ENCODE measurements at regions of chr4 and their contacts with region 1.

Region 1: DNA sequence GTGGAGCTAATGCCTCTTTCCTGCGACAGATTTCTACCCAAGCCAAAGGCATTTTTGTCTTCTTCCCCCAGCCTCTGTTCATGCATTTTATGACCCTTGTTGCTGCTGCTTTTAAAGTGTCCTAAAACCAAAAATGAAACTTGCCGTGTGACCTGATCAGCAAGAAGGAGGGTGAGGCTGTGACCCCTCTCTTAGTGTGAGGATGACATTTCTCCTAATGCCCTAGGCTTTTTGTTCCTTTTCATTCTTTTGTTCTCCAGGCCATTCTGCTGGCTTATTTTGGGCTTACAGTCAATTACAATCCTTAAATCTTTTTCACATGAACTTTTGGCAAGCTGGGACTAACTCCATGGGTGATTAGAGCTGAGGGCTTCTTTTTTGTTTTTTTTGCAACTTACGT is 34.4 kb downstream of the PTTG2 start:
- DNase-seq: no peak
- ATAC-seq: no peak
- H3K4me3 Mint-ChIP-seq: no peak overlapping the region
- H3K27ac Mint-ChIP-seq: peak overlapping the region; percentile 15
- H3K4me1 Mint-ChIP-seq: peaks cover 69% of the 10 kb centered on the region
- H3K27me3 Mint-ChIP-seq: no peaks in the 10 kb centered on the region
- CTCF ChIP-seq: no peak

Region 2: GRCh38 chr4:37983951-37984350 is 10.6 kb before region 1 on chr4:
- CTCF ChIA-PET with region 1: no interaction called
- POLR2A ChIA-PET with region 1: no interaction called
- intact Hi-C with region 1: no loop called
- DNase-seq: no peak
- ATAC-seq: no peak
- H3K4me3 Mint-ChIP-seq: no peak overlapping the region
- H3K27ac Mint-ChIP-seq: no peak overlapping the region
- H3K4me1 Mint-ChIP-seq: peaks cover 75% of the 10 kb centered on the region
- H3K27me3 Mint-ChIP-seq: no peaks in the 10 kb centered on the region
- CTCF ChIP-seq: no peak

Region 3: GRCh38 chr4:38011511-38012162 is 17.1 kb after region 1 on chr4:
- CTCF ChIA-PET with region 1: no interaction called
- POLR2A ChIA-PET with region 1: no interaction called
- intact Hi-C with region 1: loop called (anchors 2 kb)
- DNase-seq: no peak
- ATAC-seq: no peak
- H3K4me3 Mint-ChIP-seq: no peak overlapping the region
- H3K27ac Mint-ChIP-seq: no peak overlapping the region
- H3K4me1 Mint-ChIP-seq: peaks cover 35% of the 10 kb centered on the region
- H3K27me3 Mint-ChIP-seq: no peaks in the 10 kb centered on the region
- CTCF ChIP-seq: no peak